Heart right ventricle (tissue), 16 donors: ENCODE measurements at regions of chr9 and their contacts with region 1.

Region 1: DNA sequence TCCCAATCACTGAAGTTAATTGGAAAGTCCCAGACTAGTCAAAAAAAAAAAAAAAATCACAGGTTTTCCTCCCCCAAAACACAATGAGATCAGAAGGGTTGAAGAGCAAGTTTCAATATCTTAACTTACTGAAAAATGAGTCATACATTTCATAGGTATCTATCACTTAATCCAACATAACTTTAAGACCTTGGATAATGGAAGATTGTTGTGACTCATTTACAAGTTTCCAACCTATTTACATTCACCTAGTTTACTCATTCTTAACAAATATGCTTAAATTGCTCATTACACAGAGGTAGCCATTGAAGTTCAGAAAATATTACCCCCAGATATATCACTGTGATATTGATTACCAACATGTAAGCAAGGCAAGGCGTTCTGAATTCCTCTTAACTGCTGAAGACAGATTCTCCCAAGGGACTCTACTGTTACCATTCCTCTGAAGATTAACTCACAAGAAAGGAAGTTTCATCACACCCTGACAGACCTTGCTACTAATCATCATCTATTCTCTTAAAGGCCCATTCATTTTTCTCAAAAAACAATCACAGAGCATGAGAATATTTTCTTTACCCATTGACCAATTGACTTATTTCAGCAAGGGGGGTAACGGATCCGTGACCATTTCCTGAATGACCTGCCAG is 563.8 kb downstream of the TLE1 start:
- DNase-seq: no peak
- ATAC-seq: no peak
- H3K4me3 ChIP-seq: no peak overlapping the region
- H3K27ac ChIP-seq: no peak overlapping the region
- H3K4me1 ChIP-seq: no peaks in the 10 kb centered on the region
- H3K27me3 ChIP-seq: peaks cover 0 to 7% (median 0%) of the 10 kb centered on the region in 7 donors
- CTCF ChIP-seq: no peak

Region 2: GRCh38 chr9:81022177-81022576 is 103.4 kb before region 1 on chr9:
- intact Hi-C with region 1: no loop called
- DNase-seq: no peak
- ATAC-seq: no peak
- H3K4me3 ChIP-seq: no peak overlapping the region
- H3K27ac ChIP-seq: no peak overlapping the region
- H3K4me1 ChIP-seq: no peaks in the 10 kb centered on the region
- H3K27me3 ChIP-seq: no peaks in the 10 kb centered on the region
- CTCF ChIP-seq: no peak

Region 3: GRCh38 chr9:81058782-81059181 is 66.8 kb before region 1 on chr9:
- intact Hi-C with region 1: no loop called
- DNase-seq: no peak
- ATAC-seq: no peak
- H3K4me3 ChIP-seq: no peak overlapping the region
- H3K27ac ChIP-seq: no peak overlapping the region
- H3K4me1 ChIP-seq: no peaks in the 10 kb centered on the region
- H3K27me3 ChIP-seq: no peaks in the 10 kb centered on the region
- CTCF ChIP-seq: no peak

Region 4: DNA sequence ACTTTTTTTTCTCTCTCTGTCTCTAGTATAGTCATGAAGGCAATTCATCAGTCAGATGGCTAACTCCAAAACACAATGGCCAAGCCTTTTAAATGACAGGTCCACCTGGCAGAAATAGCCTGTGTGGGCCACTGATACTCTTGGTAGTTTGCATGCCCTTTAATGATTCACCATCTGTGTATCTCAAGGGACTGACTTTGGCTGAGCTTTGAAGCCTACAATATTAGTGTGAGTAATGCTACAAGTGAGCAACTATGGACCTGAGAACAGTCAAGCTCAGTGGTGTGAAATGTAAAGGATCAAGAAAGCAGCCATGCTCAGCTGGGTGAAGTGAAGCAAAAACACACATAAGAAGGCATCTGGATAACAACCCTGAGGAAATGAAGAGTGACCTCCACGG is 56.9 kb after region 1 on chr9:
- intact Hi-C with region 1: loop called in 1 of 10 experiments (anchors 10 kb)
- DNase-seq: no peak
- ATAC-seq: no peak
- H3K4me3 ChIP-seq: no peak overlapping the region
- H3K27ac ChIP-seq: no peak overlapping the region
- H3K4me1 ChIP-seq: peaks cover 0 to 4% (median 0%) of the 10 kb centered on the region in 9 donors
- H3K27me3 ChIP-seq: no peaks in the 10 kb centered on the region
- CTCF ChIP-seq: no peak

Region 5: GRCh38 chr9:81207651-81208050 is 82.1 kb after region 1 on chr9:
- intact Hi-C with region 1: no loop called
- DNase-seq: no peak
- ATAC-seq: no peak
- H3K4me3 ChIP-seq: no peak overlapping the region
- H3K27ac ChIP-seq: no peak overlapping the region
- H3K4me1 ChIP-seq: no peaks in the 10 kb centered on the region
- H3K27me3 ChIP-seq: no peaks in the 10 kb centered on the region
- CTCF ChIP-seq: no peak